ENCODE measurements at regions of chr9 and their contacts with region 1.

Region 1: DNA sequence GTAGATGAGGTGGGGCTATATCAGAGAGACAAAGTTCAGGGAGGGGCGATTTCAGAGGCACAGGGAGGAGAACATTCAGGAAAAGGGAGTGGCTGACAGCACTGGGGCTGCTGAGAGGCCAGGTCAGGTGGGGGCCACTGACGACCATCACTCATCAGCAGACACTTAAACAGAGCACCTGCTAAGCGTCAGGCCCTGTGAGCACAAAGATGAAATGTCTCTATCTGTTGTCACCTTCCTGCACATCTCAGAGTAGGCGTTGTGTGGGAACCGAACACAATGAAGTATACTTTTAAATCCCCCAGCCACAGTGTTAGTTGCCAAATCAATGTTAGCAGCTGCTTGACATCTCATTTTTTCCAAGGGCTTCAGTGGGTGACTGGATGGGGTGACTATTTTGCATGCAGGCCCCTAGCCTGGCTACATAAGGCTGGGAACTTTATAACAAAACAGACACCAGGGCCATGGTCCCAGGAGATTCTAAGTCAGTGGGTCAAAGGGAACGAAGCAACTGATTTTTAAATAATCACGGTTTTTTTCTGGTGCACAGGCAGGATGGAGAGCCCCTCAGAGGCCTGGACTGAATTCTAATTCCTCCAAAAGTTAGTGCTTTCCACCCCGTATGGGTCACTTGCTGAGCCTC is 31.1 kb upstream of the ANKRD18A start:
- DNase-seq: no peak
- ATAC-seq: no peak
- H3K4me3 Mint-ChIP-seq: no peak overlapping the region
- H3K27ac Mint-ChIP-seq: no peak overlapping the region
- H3K4me1 Mint-ChIP-seq: no peaks in the 10 kb centered on the region
- H3K27me3 Mint-ChIP-seq: peaks cover 4% of the 10 kb centered on the region
- CTCF ChIP-seq: no peak

Region 2: GRCh38 chr9:38707885-38708637 is 56.5 kb after region 1 on chr9:
- CTCF ChIA-PET with region 1: no interaction called
- POLR2A ChIA-PET with region 1: no interaction called
- intact Hi-C with region 1: loop called (anchors 10 kb)
- DNase-seq: no peak
- ATAC-seq: peak; percentile 20
- H3K4me3 Mint-ChIP-seq: no peak overlapping the region
- H3K27ac Mint-ChIP-seq: no peak overlapping the region
- H3K4me1 Mint-ChIP-seq: no peaks in the 10 kb centered on the region
- H3K27me3 Mint-ChIP-seq: peaks cover 6% of the 10 kb centered on the region
- CTCF ChIP-seq: no peak

Region 3: GRCh38 chr9:38737246-38737645 is 85.7 kb after region 1 on chr9:
- CTCF ChIA-PET with region 1: no interaction called
- POLR2A ChIA-PET with region 1: no interaction called
- intact Hi-C with region 1: no loop called
- DNase-seq: no peak
- ATAC-seq: no peak
- H3K4me3 Mint-ChIP-seq: no peak overlapping the region
- H3K27ac Mint-ChIP-seq: no peak overlapping the region
- H3K4me1 Mint-ChIP-seq: no peaks in the 10 kb centered on the region
- H3K27me3 Mint-ChIP-seq: peaks cover 6% of the 10 kb centered on the region
- CTCF ChIP-seq: no peak